Vagina (tissue), 2 donors: ENCODE measurements at regions of chr3 and their contacts with region 1.

Region 1: GRCh38 chr3:77038468-77038929 is 1.4 kb upstream of the ROBO2 start:
- DNase-seq: peak in 1 of 2 donors; percentile 90
- H3K4me3 ChIP-seq: peak overlapping the region; percentile 58 to 66
- H3K27ac ChIP-seq: peak overlapping the region; percentile 67
- H3K4me1 ChIP-seq: peaks cover 10% of the 10 kb centered on the region
- H3K27me3 ChIP-seq: no peaks in the 10 kb centered on the region
- CTCF ChIP-seq: peak in 2 of 3 experiments; percentile 58 to 65
- POLR2A ChIP-seq: peak in 1 of 2 donors; percentile 28

Region 2: DNA sequence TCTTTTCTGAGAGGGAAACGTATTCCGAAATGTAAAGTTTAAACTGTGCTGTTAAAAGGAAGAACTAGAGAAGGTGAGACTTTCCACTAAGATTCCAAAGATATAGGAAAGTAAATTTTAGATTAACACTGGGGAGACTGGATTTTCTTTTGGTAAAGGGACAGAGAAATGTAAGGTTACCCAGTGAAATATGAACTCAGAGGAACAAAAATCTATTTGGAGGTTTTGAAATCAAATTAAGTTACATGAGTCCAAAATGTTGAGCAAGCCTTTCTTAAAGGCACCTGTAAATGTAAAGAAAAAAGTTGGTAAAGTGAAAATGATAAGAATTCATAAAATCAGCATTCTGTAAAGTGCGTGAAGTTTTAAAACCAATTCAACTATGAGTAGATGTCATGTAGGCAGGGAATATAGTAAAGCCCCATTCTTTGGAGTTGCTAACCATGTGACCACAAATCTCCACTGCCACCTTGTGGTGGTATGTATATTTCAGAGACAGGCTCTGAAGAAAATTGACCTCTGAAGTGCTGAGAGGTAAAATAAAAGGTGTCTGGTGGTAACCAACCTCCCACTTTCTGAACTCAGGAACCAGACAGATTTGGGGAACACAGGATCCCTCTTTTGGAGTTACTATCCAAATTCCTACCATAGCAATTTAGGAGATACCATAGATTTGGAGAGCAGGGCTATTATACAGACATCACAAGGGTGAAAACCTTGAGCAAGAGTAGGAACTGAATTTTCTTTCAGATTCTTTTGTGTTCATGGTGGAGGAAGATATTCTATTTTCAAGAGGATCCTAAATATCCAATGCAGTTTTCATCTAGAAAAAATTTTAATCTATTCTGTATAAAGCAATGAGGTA is 216.7 kb after region 1 on chr3:
- intact Hi-C with region 1: loop called (anchors 10 kb)
- DNase-seq: no peak
- H3K4me3 ChIP-seq: no peak overlapping the region
- H3K27ac ChIP-seq: no peak overlapping the region
- H3K4me1 ChIP-seq: no peaks in the 10 kb centered on the region
- H3K27me3 ChIP-seq: no peaks in the 10 kb centered on the region
- CTCF ChIP-seq: peak; percentile 38 to 62 (median 56)
- POLR2A ChIP-seq: no peak

Region 3: DNA sequence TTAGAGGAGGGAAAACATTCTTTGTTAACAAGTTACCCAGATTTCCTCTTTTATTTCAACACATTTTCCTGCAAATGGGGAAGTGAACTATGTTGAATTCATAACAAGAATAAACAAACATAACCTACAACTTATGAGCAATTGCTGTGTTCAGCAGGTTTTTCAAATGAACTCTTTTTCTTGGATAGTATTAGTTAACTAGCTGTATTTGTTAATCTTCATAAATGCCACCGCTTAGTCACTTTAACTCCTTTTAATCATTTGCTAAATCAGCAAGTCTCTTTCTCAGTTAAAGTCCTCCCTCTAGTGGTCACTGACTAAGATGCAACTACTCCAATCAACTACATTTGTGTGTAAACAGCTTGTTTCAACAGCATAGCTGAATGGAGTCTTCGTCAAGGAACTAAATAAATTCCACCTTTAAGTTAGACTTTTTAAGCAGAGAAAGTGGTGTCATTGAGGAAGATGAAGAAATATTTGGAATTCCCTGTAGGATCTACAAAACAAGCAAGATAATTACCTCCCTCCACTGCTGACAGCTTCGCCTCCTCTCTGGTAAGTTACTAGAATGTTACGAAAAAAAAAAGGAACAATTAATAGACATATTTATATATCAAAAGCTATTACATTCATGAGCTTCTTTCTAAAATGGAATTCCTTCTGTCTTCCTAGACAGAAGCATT is 1607.3 kb after region 1 on chr3:
- intact Hi-C with region 1: loop called (anchors 10 kb)
- DNase-seq: no peak
- H3K4me3 ChIP-seq: no peak overlapping the region
- H3K27ac ChIP-seq: no peak overlapping the region
- H3K4me1 ChIP-seq: no peaks in the 10 kb centered on the region
- H3K27me3 ChIP-seq: no peaks in the 10 kb centered on the region
- CTCF ChIP-seq: peak; percentile 44 to 79 (median 69)
- POLR2A ChIP-seq: no peak